ENCODE measurements at regions of chr9 and their contacts with region 1.

Region 1: GRCh38 chr9:69193685-69194032 is 19.6 kb downstream of the TJP2 start:
- DNase-seq: no peak
- ATAC-seq: no peak
- H3K4me3 ChIP-seq: no peak overlapping the region
- H3K27ac ChIP-seq: peak overlapping the region; percentile 25
- H3K4me1 ChIP-seq: peaks cover 95% of the 10 kb centered on the region
- H3K27me3 ChIP-seq: no peaks in the 10 kb centered on the region
- CTCF ChIP-seq: peak; percentile 65
- EP300 ChIP-seq: no peak
- POLR2A ChIP-seq: no peak
- RAD21 ChIP-seq: no peak

Region 2: DNA sequence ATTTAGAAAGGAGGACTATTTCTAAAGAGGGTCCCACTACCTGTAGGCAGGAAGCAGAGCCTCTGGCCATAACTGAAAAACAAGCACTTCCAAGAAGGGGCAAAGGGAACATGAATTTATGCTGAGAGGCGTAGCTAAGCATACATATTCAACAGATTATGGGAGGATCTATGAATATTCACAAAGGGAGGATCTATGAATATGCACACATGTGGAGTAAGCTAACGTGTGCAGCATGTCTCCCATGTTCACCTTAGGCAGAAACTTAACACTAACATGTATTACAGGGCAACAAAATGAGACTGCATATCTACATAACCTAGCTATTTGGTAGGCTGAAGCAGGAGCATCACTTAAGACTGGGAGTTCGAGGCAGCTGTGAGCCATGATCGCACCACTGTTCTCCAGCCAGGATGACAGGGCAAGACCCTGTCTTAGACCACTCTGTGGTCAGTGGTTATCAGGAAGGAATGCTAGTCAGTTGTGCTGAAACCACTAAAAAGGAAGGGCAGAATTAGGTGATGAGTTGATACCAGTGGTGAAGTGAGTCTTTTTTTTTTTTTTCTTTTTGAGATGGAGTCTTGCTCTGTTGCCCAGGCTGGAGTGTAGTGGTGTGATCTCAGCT is 137.4 kb before region 1 on chr9:
- CTCF ChIA-PET with region 1: interaction called, 29 read pairs
- POLR2A ChIA-PET with region 1: interaction called, 5 read pairs
- in situ Hi-C with region 1: no loop called
- intact Hi-C with region 1: loop called (anchors 1 kb)
- DNase-seq: no peak
- ATAC-seq: no peak
- H3K4me3 ChIP-seq: no peak overlapping the region
- H3K27ac ChIP-seq: no peak overlapping the region
- H3K4me1 ChIP-seq: no peaks in the 10 kb centered on the region
- H3K27me3 ChIP-seq: no peaks in the 10 kb centered on the region
- CTCF ChIP-seq: no peak
- EP300 ChIP-seq: no peak
- POLR2A ChIP-seq: no peak
- RAD21 ChIP-seq: no peak

Region 3: GRCh38 chr9:69104830-69105527 is 88.7 kb before region 1 on chr9:
- CTCF ChIA-PET with region 1: interaction called, 3 read pairs
- POLR2A ChIA-PET with region 1: interaction called, 12 read pairs
- in situ Hi-C with region 1: no loop called
- intact Hi-C with region 1: loop called (anchors 1 kb)
- DNase-seq: peak; percentile 86
- ATAC-seq: peak; percentile 90
- H3K4me3 ChIP-seq: peak overlapping the region; percentile 33 to 69 (median 48)
- H3K27ac ChIP-seq: peak overlapping the region; percentile 100
- H3K4me1 ChIP-seq: peaks cover 63% of the 10 kb centered on the region
- H3K27me3 ChIP-seq: no peaks in the 10 kb centered on the region
- CTCF ChIP-seq: no peak
- EP300 ChIP-seq: peak in 1 of 2 experiments; percentile 78; a peak in 2 of 4 replicates
- POLR2A ChIP-seq: peak; percentile 52 to 67; a peak in 3 of 4 replicates
- RAD21 ChIP-seq: no peak

Region 4: DNA sequence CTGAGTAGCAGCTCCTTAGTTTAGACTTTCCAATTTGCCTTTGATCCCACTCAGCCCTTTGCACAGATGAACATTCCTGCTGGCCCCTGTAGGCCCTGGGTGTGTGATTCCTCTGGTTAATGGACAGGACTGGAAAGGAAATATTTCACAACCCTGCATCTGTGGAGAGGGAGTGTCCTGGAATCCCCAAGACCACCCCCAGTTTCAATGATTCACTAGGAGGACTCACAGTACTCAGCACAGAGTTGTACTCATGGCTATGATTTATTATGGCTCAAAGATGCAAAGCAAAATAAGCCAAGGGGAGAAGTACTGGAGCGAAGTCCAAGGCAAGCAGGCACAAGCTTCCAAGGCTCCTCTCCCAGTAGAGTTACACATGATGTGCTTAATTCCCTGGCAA is 62.0 kb before region 1 on chr9:
- CTCF ChIA-PET with region 1: no interaction called
- POLR2A ChIA-PET with region 1: interaction called, 4 read pairs
- in situ Hi-C with region 1: no loop called
- intact Hi-C with region 1: loop called (anchors 2 kb)
- DNase-seq: peak; percentile 93
- ATAC-seq: peak; percentile 97
- H3K4me3 ChIP-seq: peak overlapping the region in 1 of 3 experiments; percentile 45; a peak in 1 of 6 replicates
- H3K27ac ChIP-seq: peak overlapping the region; percentile 70
- H3K4me1 ChIP-seq: peaks cover 63% of the 10 kb centered on the region
- H3K27me3 ChIP-seq: no peaks in the 10 kb centered on the region
- CTCF ChIP-seq: no peak
- EP300 ChIP-seq: peak in 1 of 2 experiments; percentile 54; a peak in 2 of 4 replicates
- POLR2A ChIP-seq: peak in 1 of 2 experiments; percentile 27; a peak in 2 of 4 replicates
- RAD21 ChIP-seq: no peak

Region 5: GRCh38 chr9:69157751-69158466 is 35.8 kb before region 1 on chr9:
- CTCF ChIA-PET with region 1: interaction called, 3 read pairs
- POLR2A ChIA-PET with region 1: interaction called, 15 read pairs
- in situ Hi-C with region 1: no loop called
- intact Hi-C with region 1: loop called (anchors 1 kb)
- DNase-seq: no peak
- ATAC-seq: no peak
- H3K4me3 ChIP-seq: no peak overlapping the region
- H3K27ac ChIP-seq: no peak overlapping the region
- H3K4me1 ChIP-seq: peaks cover 30% of the 10 kb centered on the region
- H3K27me3 ChIP-seq: no peaks in the 10 kb centered on the region
- CTCF ChIP-seq: peak; percentile 55
- EP300 ChIP-seq: no peak
- POLR2A ChIP-seq: no peak
- RAD21 ChIP-seq: no peak

Region 6: GRCh38 chr9:69174616-69175463 is 18.8 kb before region 1 on chr9:
- CTCF ChIA-PET with region 1: no interaction called
- POLR2A ChIA-PET with region 1: interaction called, 97 read pairs
- in situ Hi-C with region 1: no loop called
- intact Hi-C with region 1: loop called (anchors 1 kb)
- DNase-seq: peak; percentile 48
- ATAC-seq: peak; percentile 40
- H3K4me3 ChIP-seq: peak overlapping the region; percentile 66 to 73 (median 67)
- H3K27ac ChIP-seq: peak overlapping the region; percentile 50
- H3K4me1 ChIP-seq: peaks cover 91% of the 10 kb centered on the region
- H3K27me3 ChIP-seq: no peaks in the 10 kb centered on the region
- CTCF ChIP-seq: no peak
- EP300 ChIP-seq: no peak
- POLR2A ChIP-seq: no peak; a peak in 2 of 4 replicates
- RAD21 ChIP-seq: no peak